Ascending aorta (tissue), 2 donors: ENCODE measurements at regions of chr3 and their contacts with region 1.

Region 1: GRCh38 chr3:31981206-31982181 is at the starts of genes OSBPL10 and ZNF860:
- DNase-seq: peak; percentile 61 to 93
- H3K4me3 ChIP-seq: peak within 1 kb of the TSS; percentile 63 to 79
- H3K27ac ChIP-seq: peak within 1 kb of the TSS; percentile 87 to 91
- H3K4me1 ChIP-seq: peaks cover 0 to 9% of the 10 kb centered on the region in 2 donors
- H3K27me3 ChIP-seq: no peaks in the 10 kb centered on the region
- CTCF ChIP-seq: peak in 1 of 3 experiments; percentile 8
- total RNA-seq, gene OSBPL10: 169 TPM
- total RNA-seq, gene ZNF860: 0.43 TPM

Region 2: DNA sequence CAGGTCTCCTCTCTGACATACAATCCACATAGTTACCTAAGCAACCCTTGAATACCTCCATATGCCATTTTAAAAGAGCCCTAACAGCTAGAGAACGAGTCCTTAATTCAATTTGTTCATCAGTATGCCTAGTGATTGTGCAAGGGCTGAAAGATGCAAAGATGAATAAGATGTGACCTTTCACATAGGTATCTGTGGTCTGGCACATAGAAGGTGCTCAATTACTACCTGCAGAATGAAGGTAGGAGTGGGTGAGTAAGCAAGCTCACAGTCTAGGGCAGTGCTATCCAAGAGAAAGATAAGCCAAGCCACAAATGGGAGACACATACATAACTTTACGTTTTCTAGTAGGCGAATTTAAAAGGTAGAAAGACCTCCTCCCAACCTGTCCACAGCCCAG is 158.3 kb before region 1 on chr3:
- intact Hi-C with region 1: no loop called
- DNase-seq: no peak
- H3K4me3 ChIP-seq: no peak overlapping the region
- H3K27ac ChIP-seq: no peak overlapping the region
- H3K4me1 ChIP-seq: no peaks in the 10 kb centered on the region
- H3K27me3 ChIP-seq: no peaks in the 10 kb centered on the region
- CTCF ChIP-seq: no peak

Region 3: GRCh38 chr3:31876331-31876730 is 105.2 kb before region 1 on chr3:
- intact Hi-C with region 1: loop called (anchors 10 kb)
- DNase-seq: no peak
- H3K4me3 ChIP-seq: peak overlapping the region in 1 of 2 donors; percentile 3
- H3K27ac ChIP-seq: no peak overlapping the region
- H3K4me1 ChIP-seq: peaks cover 0 to 13% of the 10 kb centered on the region in 2 donors
- H3K27me3 ChIP-seq: no peaks in the 10 kb centered on the region
- CTCF ChIP-seq: no peak

Region 4: DNA sequence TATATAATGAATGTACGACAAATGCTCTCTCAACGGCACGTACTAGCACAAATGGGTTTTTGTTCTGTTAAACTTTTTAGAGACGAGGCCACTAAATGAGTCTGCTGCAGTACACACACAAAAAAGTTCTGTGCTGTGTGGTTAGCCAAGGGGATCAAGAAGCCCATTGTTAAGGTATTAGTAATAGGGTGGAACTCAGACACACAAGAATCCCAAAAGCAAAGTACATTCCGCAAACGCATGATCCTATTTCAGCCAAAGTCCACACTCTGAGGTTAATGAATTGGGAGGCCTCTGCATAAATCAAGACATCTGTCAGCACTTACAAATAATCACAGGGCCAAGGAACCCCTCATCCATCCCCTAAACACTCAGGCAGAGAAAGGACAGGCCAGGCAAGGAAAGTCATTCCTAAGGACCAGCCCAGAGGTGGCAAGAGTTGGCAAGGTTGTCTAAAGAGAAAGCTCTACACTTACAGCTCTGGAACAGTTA is 12.5 kb before region 1 on chr3:
- intact Hi-C with region 1: loop called (anchors 1 kb)
- DNase-seq: peak in 1 of 2 donors; percentile 77
- H3K4me3 ChIP-seq: peak overlapping the region in 1 of 2 donors; percentile 41
- H3K27ac ChIP-seq: peak overlapping the region; percentile 81 to 89
- H3K4me1 ChIP-seq: peaks cover 3 to 27% of the 10 kb centered on the region in 2 donors
- H3K27me3 ChIP-seq: no peaks in the 10 kb centered on the region
- CTCF ChIP-seq: no peak

Region 5: DNA sequence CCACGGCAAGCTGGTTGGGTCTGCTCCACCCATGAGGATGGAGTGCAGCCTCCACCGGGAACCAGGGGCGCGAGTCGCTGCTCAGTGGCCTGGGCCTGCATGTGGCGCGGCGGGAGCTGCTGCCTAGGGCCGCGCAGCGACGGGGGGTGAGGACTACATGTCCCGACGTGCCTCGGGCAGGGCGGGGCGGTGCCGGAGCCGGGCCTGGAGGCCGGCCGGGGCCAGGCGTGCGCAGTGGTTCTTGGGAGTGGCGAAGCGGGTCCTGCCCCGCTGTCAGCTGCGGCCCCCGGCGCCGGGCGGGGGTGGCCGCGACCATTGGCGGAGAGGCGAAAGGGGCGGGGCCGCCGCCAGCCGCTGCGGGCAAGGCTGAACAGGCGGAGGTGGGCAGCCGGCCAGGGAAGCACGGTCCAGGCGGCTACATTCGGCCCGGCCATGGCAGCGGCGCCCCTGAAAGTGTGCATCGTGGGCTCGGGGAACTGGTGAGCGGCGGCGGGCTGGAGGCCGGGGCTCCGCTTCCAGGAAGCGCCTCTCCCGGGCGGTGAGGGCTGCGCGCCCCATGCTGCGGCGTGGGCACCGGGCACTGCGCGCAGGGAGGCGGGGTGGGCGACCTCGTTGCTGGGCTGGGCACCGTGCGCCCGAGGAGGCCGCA is 124.9 kb after region 1 on chr3 and contains the start of gene GPD1L:
- intact Hi-C with region 1: loop called (anchors 1 kb)
- DNase-seq: peak; percentile 80 to 97
- H3K4me3 ChIP-seq: peak within 1 kb of the TSS; percentile 87 to 89
- H3K27ac ChIP-seq: peak within 1 kb of the TSS; percentile 70 to 75
- H3K4me1 ChIP-seq: peaks cover 6 to 24% of the 10 kb centered on the region in 2 donors
- H3K27me3 ChIP-seq: no peaks in the 10 kb centered on the region
- CTCF ChIP-seq: peak in 1 of 3 experiments; percentile 7
- total RNA-seq, gene GPD1L: 14.4 TPM